ENCODE measurements at regions of chr5 and their contacts with region 1.

Region 1: GRCh38 chr5:73792687-73793320 is 166.8 kb downstream of the ARHGEF28 start:
- DNase-seq: peak; percentile 56 to 73
- ATAC-seq: peak; percentile 57 to 88 (median 80)
- H3K4me3 ChIP-seq: no peak overlapping the region
- H3K27ac ChIP-seq: no peak overlapping the region
- H3K4me1 ChIP-seq: peaks cover 0 to 36% (median 11%) of the 10 kb centered on the region in 9 donors
- H3K27me3 ChIP-seq: peaks cover 0 to 5% (median 0%) of the 10 kb centered on the region in 7 donors
- CTCF ChIP-seq: peak; percentile 90 to 99 (median 96)

Region 2: GRCh38 chr5:73591102-73591695 is 201.6 kb before region 1 on chr5:
- intact Hi-C with region 1: loop called (anchors 1 to 2 kb)
- DNase-seq: peak in 1 of 2 donors; percentile 68
- ATAC-seq: peak in 6 of 8 donors; percentile 65 to 81 (median 73)
- H3K4me3 ChIP-seq: no peak overlapping the region
- H3K27ac ChIP-seq: no peak overlapping the region
- H3K4me1 ChIP-seq: no peaks in the 10 kb centered on the region
- H3K27me3 ChIP-seq: no peaks in the 10 kb centered on the region
- CTCF ChIP-seq: peak; percentile 74 to 91 (median 86)

Region 3: GRCh38 chr5:73748510-73749400 is 44.0 kb before region 1 on chr5:
- intact Hi-C with region 1: loop called in 1 of 10 experiments (anchors 5 kb)
- DNase-seq: peak; percentile 58 to 60
- ATAC-seq: peak; percentile 44 to 86 (median 74)
- H3K4me3 ChIP-seq: peak overlapping the region in 5 of 10 donors; percentile 3 to 21 (median 7)
- H3K27ac ChIP-seq: peak overlapping the region in 9 of 10 donors; percentile 22 to 77 (median 49)
- H3K4me1 ChIP-seq: peaks cover 0 to 33% (median 18%) of the 10 kb centered on the region in 9 donors
- H3K27me3 ChIP-seq: no peaks in the 10 kb centered on the region
- CTCF ChIP-seq: no peak

Region 4: DNA sequence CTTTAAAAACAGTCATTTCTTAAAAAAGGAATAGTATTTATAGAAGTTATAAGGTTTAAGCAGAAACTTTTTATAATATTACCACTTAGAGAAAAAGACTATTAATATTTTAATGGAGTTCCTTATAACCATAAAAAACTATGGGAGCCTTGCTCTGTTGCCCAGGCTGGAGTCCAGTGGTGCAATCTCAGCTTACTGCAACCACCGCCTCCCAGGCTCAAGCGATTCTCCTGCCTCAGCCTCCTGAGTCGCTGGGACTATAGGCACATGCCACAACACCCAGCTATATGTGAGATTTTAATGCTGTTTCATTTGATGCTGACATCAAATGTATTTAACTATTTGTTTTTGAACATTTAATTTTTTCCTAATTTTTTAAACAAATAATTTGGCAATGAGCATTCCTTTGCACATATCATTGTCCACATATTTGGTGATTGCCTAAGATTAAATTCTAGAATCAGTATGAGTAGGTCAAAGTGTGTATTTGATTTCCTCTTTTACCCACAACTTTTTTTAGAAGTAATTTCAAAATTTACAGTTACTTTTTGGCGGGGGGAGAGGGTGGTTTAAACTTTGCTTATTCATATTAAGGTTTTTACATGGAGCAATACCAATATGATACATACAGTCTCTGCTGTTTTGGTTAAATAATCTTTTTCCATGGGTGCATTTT is 68.6 kb after region 1 on chr5:
- intact Hi-C with region 1: loop called in 1 of 10 experiments (anchors 5 kb)
- DNase-seq: no peak
- ATAC-seq: no peak
- H3K4me3 ChIP-seq: no peak overlapping the region
- H3K27ac ChIP-seq: peak overlapping the region in 1 of 10 donors; percentile 27
- H3K4me1 ChIP-seq: peaks cover 0 to 45% (median 15%) of the 10 kb centered on the region in 9 donors
- H3K27me3 ChIP-seq: no peaks in the 10 kb centered on the region
- CTCF ChIP-seq: no peak

Region 5: DNA sequence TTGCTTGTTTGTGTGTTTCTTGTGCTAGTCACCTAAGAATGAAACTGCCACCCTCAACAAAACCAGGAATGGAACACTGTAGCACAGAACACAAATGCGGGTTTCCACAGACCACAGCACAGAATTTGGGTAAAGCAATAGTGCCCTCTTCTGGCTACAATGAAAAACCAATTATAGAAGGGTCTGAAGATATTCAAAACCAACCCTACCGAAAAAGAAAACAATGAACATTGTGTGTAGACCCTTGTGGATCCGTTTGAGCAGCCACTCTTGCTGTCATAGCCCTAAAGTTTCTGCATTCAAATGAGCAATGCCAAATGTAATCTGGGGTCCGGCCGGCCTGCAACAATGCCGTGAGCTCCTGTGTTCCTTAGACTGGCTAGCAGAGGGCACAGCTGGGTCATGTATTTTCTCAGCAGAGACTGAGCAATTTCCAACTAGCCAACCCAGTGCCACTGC is 856.1 kb after region 1 on chr5:
- intact Hi-C with region 1: loop called in 3 of 10 experiments (anchors 5 to 10 kb)
- DNase-seq: no peak
- ATAC-seq: peak; percentile 75 to 93 (median 90)
- H3K4me3 ChIP-seq: peak overlapping the region in 1 of 10 donors; percentile 25
- H3K27ac ChIP-seq: no peak overlapping the region
- H3K4me1 ChIP-seq: peaks cover 0 to 17% (median 7%) of the 10 kb centered on the region in 9 donors
- H3K27me3 ChIP-seq: no peaks in the 10 kb centered on the region
- CTCF ChIP-seq: peak; percentile 54 to 88 (median 77)

Measured in heart right ventricle (tissue), 16 donors.